GM10248 (cell line): ENCODE measurements at regions of chr5 and their contacts with region 1.

Region 1: GRCh38 chr5:144947019-144947418 is 776.3 kb downstream of the KCTD16 start:
- DNase-seq: no peak
- CTCF ChIP-seq: no peak

Region 2: GRCh38 chr5:144958002-144958401 is 11.0 kb after region 1 on chr5:
- CTCF ChIA-PET with region 1: interaction called, 10 read pairs
- POLR2A ChIA-PET with region 1: no interaction called
- DNase-seq: no peak
- CTCF ChIP-seq: no peak

Region 3: DNA sequence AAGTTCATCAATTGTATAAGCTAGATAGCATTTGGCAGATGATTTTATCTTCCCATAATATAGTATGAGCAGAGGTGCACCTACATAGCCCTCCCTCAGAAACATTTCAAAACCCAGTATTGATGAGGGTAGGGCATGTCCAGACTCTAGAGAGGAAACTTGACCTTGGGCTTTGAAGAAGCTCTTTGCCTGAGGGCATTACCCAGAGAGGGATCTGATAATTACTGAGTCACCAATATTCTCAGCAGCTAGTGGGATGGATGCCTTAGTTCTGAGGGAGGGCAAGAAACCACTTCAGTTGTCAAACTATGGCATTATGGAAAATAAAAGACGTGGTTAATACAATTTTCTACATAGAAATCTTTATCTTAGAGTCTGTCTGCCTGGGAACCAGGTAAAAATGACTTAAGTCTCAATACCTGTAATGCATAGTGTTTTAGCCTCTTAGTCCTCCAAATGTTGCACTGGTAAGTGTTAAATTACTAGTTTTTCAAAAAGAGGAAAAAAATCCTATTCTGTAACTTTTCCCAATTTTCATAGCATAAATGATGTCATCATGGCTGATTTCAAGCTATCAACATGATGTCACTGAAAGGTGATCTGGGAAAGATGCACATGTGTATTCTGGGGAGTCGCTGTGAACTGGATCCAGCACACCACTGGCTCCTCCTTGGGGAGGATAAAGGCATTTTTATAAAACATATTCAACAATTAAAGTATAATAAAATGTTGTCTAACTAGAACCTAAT is 32.7 kb after region 1 on chr5:
- CTCF ChIA-PET with region 1: no interaction called
- POLR2A ChIA-PET with region 1: no interaction called
- DNase-seq: no peak
- CTCF ChIP-seq: no peak

Region 4: GRCh38 chr5:145378226-145378625 is 431.2 kb after region 1 on chr5:
- CTCF ChIA-PET with region 1: no interaction called
- POLR2A ChIA-PET with region 1: no interaction called
- DNase-seq: no peak
- CTCF ChIP-seq: no peak